Caco-2 (cell line): ENCODE measurements at regions of chr7 and their contacts with region 1.

Region 1: DNA sequence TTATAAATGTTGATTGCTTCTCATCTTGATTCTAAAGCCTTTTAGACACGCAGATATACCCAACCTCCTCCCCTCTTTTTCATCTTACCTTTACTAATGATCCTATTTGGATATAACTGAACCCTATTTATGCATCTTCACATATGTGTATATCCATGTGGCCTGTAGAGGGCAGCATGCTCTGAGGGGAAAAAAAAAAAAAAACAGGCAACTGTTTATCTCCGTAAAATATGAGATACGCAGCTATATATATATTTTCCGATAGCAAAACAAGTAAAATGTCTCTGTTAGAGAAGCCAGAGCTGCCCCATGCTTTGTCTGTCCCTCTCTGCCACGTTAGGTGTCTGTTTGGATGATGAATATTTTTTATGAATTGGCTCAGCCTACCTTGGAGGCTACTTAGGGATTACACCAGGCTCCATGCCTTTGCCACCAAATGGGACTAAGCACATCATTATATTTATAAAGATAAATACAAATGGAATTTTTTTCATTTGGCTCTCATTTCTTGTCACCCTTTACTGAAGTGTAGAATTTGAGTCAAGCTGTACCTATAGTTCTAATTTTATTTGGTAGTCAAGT is 174.8 kb upstream of the FZD1 start:
- DNase-seq: peak in 1 of 2 experiments; percentile 26
- H3K4me3 ChIP-seq: no peak overlapping the region
- H3K4me3 Mint-ChIP-seq: peak overlapping the region; percentile 30
- H3K27ac Mint-ChIP-seq: no peak overlapping the region
- H3K4me1 ChIP-seq: no peaks in the 10 kb centered on the region
- H3K4me1 Mint-ChIP-seq: no peaks in the 10 kb centered on the region
- H3K27me3 ChIP-seq: no peaks in the 10 kb centered on the region
- H3K27me3 Mint-ChIP-seq: no peaks in the 10 kb centered on the region
- CTCF ChIP-seq: peak; percentile 76 to 77

Region 2: DNA sequence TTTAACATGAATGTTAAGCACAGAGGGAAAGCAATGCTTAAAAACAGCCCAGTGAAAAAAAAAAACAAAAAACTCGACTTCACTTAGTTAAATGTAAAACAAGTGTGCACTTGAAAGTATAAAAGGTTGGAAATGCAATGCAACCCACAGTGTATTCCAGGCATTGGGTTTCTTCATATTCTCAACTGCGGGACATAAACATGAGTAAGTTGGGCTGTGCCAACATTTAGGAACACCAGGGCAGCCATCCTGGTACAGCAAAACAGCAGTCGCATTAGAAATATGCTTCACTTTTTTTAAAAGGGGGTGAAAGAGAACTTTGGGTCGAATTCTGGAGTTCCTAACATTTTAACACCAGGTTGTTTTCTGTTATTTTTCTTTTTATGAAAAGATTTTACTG is 934.3 kb before region 1 on chr7:
- CTCF ChIA-PET with region 1: no interaction called
- POLR2A ChIA-PET with region 1: no interaction called
- intact Hi-C with region 1: no loop called
- DNase-seq: no peak
- H3K4me3 ChIP-seq: peak overlapping the region; percentile 87
- H3K4me3 Mint-ChIP-seq: peak overlapping the region; percentile 93
- H3K27ac Mint-ChIP-seq: peak overlapping the region; percentile 89
- H3K4me1 ChIP-seq: peaks cover 8% of the 10 kb centered on the region; the same call in 1 of the 2 replicates
- H3K4me1 Mint-ChIP-seq: no peaks in the 10 kb centered on the region
- H3K27me3 ChIP-seq: no peaks in the 10 kb centered on the region
- H3K27me3 Mint-ChIP-seq: no peaks in the 10 kb centered on the region
- CTCF ChIP-seq: no peak

Region 3: GRCh38 chr7:91264046-91264923 is 174.8 kb after region 1 on chr7 and contains the start of gene FZD1:
- CTCF ChIA-PET with region 1: no interaction called
- POLR2A ChIA-PET with region 1: no interaction called
- intact Hi-C with region 1: loop called (anchors 2 kb)
- DNase-seq: peak; percentile 95 to 96
- H3K4me3 ChIP-seq: peak within 1 kb of the TSS; percentile 61
- H3K4me3 Mint-ChIP-seq: peak within 1 kb of the TSS; percentile 89
- H3K27ac Mint-ChIP-seq: no peak within 1 kb of the TSS
- H3K4me1 ChIP-seq: peaks cover 4% of the 10 kb centered on the region
- H3K4me1 Mint-ChIP-seq: no peaks in the 10 kb centered on the region
- H3K27me3 ChIP-seq: 0 out of 2 replicates have a peak, but pooled peaks cover 1% of the 10 kb centered on the region
- H3K27me3 Mint-ChIP-seq: peaks cover 12% of the 10 kb centered on the region
- CTCF ChIP-seq: peak in 1 of 2 experiments; percentile 3
- total RNA-seq, gene FZD1: 1.2 and 1.5 TPM in 2 replicates

Region 4: GRCh38 chr7:91320366-91321078 is 231.0 kb after region 1 on chr7:
- CTCF ChIA-PET with region 1: no interaction called
- POLR2A ChIA-PET with region 1: no interaction called
- intact Hi-C with region 1: no loop called
- DNase-seq: no peak
- H3K4me3 ChIP-seq: no peak overlapping the region
- H3K4me3 Mint-ChIP-seq: no peak overlapping the region
- H3K27ac Mint-ChIP-seq: no peak overlapping the region
- H3K4me1 ChIP-seq: no peaks in the 10 kb centered on the region
- H3K4me1 Mint-ChIP-seq: no peaks in the 10 kb centered on the region
- H3K27me3 ChIP-seq: no peaks in the 10 kb centered on the region; the same call in 1 of the 2 replicates
- H3K27me3 Mint-ChIP-seq: peaks cover 8% of the 10 kb centered on the region
- CTCF ChIP-seq: no peak

Region 5: GRCh38 chr7:91636129-91636724 is 546.8 kb after region 1 on chr7:
- CTCF ChIA-PET with region 1: no interaction called
- POLR2A ChIA-PET with region 1: no interaction called
- intact Hi-C with region 1: loop called (anchors 5 kb)
- DNase-seq: peak in 1 of 2 experiments; percentile 27
- H3K4me3 ChIP-seq: no peak overlapping the region
- H3K4me3 Mint-ChIP-seq: no peak overlapping the region
- H3K27ac Mint-ChIP-seq: no peak overlapping the region
- H3K4me1 ChIP-seq: no peaks in the 10 kb centered on the region
- H3K4me1 Mint-ChIP-seq: no peaks in the 10 kb centered on the region
- H3K27me3 ChIP-seq: no peaks in the 10 kb centered on the region
- H3K27me3 Mint-ChIP-seq: peaks cover 9% of the 10 kb centered on the region
- CTCF ChIP-seq: peak; percentile 36 to 62

Region 6: GRCh38 chr7:91784463-91784862 is 695.0 kb after region 1 on chr7:
- CTCF ChIA-PET with region 1: no interaction called
- POLR2A ChIA-PET with region 1: no interaction called
- intact Hi-C with region 1: loop called (anchors 2 kb)
- DNase-seq: no peak
- H3K4me3 ChIP-seq: no peak overlapping the region
- H3K4me3 Mint-ChIP-seq: no peak overlapping the region
- H3K27ac Mint-ChIP-seq: no peak overlapping the region
- H3K4me1 ChIP-seq: no peaks in the 10 kb centered on the region
- H3K4me1 Mint-ChIP-seq: no peaks in the 10 kb centered on the region
- H3K27me3 ChIP-seq: no peaks in the 10 kb centered on the region
- H3K27me3 Mint-ChIP-seq: peaks cover 2% of the 10 kb centered on the region
- CTCF ChIP-seq: peak; percentile 2 to 34